ENCODE measurements at regions of chr9 and their contacts with region 1.

Region 1: DNA sequence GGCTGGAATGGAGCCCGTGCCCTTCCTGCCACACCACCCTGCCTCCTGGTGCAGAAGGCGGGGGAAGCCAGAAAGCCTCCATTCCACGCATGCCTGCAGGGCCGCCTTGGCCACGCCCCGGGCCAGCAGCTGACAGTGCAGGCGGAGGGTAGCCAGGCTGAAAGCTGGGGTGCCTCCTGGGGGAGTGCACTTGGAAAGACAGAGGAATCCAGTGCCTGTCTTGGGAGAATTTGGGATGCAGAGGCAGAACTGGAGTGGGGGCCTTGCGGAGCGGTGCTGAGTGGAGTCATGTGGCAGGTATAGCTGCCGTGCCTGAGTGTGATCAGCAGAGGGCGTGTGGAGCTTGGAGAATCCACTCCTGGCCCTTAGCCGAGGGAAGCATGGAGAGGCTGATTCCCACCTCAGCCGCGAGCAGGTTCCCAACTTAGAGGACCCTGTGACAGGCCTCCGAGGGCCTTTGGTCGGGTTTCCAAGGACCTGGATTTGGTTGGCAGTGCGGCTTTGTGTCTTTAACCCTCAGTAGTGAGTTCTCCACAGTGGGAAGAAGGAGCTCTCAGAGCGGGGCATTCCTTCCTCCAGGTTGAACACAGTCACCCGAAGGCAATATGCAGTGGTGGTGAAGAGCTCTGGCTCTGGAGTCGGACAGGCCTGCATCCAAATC is 9.1 kb upstream of the URM1 start:
- DNase-seq: peak; percentile 48 to 69 (median 64)
- ATAC-seq: peak; percentile 94
- H3K4me3 ChIP-seq: peak overlapping the region; percentile 61
- H3K4me3 Mint-ChIP-seq: peak overlapping the region; percentile 68 to 92 (median 87)
- H3K27ac ChIP-seq: peak overlapping the region; percentile 48
- H3K27ac Mint-ChIP-seq: peak overlapping the region in 6 of 9 donors; percentile 57 to 81 (median 74)
- H3K4me1 ChIP-seq: peaks cover 5 to 9% of the 10 kb centered on the region in 2 donors
- H3K4me1 Mint-ChIP-seq: peaks cover 0 to 22% (median 6%) of the 10 kb centered on the region in 7 donors
- H3K27me3 ChIP-seq: no peaks in the 10 kb centered on the region
- H3K27me3 Mint-ChIP-seq: no peaks in the 10 kb centered on the region

Region 2: GRCh38 chr9:128296337-128297220 is 65.5 kb before region 1 on chr9:
- CTCF ChIA-PET with region 1: interaction called, 5 read pairs
- POLR2A ChIA-PET with region 1: no interaction called
- intact Hi-C with region 1: loop called (anchors 1 kb)
- DNase-seq: no peak
- ATAC-seq: no peak
- H3K4me3 ChIP-seq: no peak overlapping the region
- H3K4me3 Mint-ChIP-seq: no peak overlapping the region
- H3K27ac ChIP-seq: no peak overlapping the region
- H3K27ac Mint-ChIP-seq: no peak overlapping the region
- H3K4me1 ChIP-seq: no peaks in the 10 kb centered on the region
- H3K4me1 Mint-ChIP-seq: peaks cover 0 to 5% (median 4%) of the 10 kb centered on the region in 7 donors
- H3K27me3 ChIP-seq: no peaks in the 10 kb centered on the region
- H3K27me3 Mint-ChIP-seq: no peaks in the 10 kb centered on the region

Region 3: DNA sequence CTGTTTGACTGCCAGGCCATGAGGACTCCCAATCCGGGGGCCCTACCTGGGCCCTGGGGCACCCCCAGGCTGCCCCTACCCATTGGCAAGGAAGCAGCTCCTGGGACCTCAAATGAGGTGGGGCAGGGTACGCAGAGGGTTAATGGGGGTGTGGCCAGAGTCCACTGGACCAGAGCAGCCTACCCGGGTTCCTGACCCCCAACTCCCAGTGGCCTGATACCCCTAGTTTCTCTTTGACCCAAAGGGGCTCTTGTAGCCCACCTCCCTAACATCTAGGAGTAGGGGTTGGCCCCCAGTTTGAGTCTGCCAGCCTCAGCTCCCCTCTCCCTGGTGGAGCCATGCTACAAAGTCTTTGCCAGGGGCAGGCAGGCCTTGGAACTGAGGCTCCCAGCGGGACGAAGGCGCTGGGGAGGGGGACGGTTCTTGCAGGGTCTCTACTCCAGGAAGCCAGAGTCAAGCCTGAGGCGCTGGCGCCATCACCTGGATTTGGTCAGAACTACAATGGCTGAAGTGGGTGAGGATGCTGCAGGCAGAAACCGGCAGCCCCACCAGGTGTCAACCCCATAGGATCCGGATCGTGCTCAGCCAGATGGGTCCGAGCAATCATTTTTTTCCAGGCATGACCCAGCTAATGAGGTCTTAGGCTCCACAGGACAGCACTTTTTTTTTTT is 50.1 kb after region 1 on chr9:
- CTCF ChIA-PET with region 1: interaction called, 20 read pairs
- POLR2A ChIA-PET with region 1: no interaction called
- intact Hi-C with region 1: loop called (anchors 1 kb)
- DNase-seq: peak in 7 of 9 donors; percentile 24 to 60 (median 43)
- ATAC-seq: peak; percentile 60
- H3K4me3 ChIP-seq: no peak overlapping the region
- H3K4me3 Mint-ChIP-seq: no peak overlapping the region
- H3K27ac ChIP-seq: no peak overlapping the region
- H3K27ac Mint-ChIP-seq: no peak overlapping the region
- H3K4me1 ChIP-seq: no peaks in the 10 kb centered on the region
- H3K4me1 Mint-ChIP-seq: peaks cover 0 to 4% (median 0%) of the 10 kb centered on the region in 7 donors
- H3K27me3 ChIP-seq: no peaks in the 10 kb centered on the region
- H3K27me3 Mint-ChIP-seq: peaks cover 47 to 61% (median 54%) of the 10 kb centered on the region in 5 donors

Region 4: GRCh38 chr9:128420060-128420650 is 58.0 kb after region 1 on chr9:
- CTCF ChIA-PET with region 1: interaction called, 23 read pairs
- POLR2A ChIA-PET with region 1: no interaction called
- intact Hi-C with region 1: loop called in 1 of 2 experiments (anchors 1 kb)
- DNase-seq: peak in 8 of 9 donors; percentile 33 to 85 (median 44)
- ATAC-seq: peak; percentile 92
- H3K4me3 ChIP-seq: peak overlapping the region; percentile 58
- H3K4me3 Mint-ChIP-seq: peak overlapping the region; percentile 70 to 88 (median 81)
- H3K27ac ChIP-seq: no peak overlapping the region
- H3K27ac Mint-ChIP-seq: no peak overlapping the region
- H3K4me1 ChIP-seq: peaks cover 8 to 9% of the 10 kb centered on the region in 2 donors
- H3K4me1 Mint-ChIP-seq: peaks cover 5 to 13% (median 11%) of the 10 kb centered on the region in 7 donors
- H3K27me3 ChIP-seq: peaks cover 5 to 7% of the 10 kb centered on the region in 2 donors
- H3K27me3 Mint-ChIP-seq: peaks cover 16 to 55% (median 25%) of the 10 kb centered on the region in 5 donors

Region 5: DNA sequence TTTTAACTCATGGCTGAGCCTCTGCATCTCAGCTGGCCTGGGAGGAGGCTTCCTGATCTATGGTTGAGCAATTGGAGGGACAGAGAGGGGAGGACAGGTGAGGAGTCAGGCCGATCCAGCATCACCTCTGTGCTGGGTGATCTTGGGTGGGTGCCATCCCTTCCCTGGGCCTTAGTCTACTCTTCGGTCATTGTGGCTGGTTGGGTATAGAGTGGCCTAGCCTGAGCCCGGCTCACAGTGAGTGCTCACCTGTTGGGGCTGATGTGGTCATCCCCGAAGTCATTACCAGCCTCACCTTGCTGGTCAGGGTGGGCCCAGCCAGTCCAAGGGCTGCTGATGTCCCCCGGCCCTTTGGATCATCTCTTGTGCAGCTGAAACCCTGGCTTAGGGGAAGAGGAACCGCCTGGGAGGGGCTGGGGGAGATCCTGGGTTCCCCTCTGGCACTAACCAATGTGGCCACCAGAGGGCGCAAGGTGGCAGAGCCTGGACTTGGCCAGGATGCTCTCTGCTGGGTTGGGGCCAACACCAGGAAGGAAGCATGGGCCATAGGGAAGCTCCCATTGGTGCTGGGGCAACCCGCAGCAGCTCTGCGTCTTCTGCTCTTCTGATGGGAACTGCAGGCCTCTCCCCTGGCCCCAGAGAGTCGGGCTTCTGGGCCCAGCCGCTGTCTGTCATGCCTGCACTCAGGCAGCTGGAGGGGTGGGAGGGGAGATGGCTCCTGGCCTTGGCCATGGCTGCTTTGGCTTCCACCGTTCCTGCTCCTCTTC is 76.4 kb after region 1 on chr9:
- CTCF ChIA-PET with region 1: no interaction called
- POLR2A ChIA-PET with region 1: no interaction called
- intact Hi-C with region 1: loop called in 1 of 2 experiments (anchors 1 kb)
- DNase-seq: peak; percentile 40 to 86 (median 70)
- ATAC-seq: peak; percentile 97
- H3K4me3 ChIP-seq: no peak overlapping the region
- H3K4me3 Mint-ChIP-seq: no peak overlapping the region
- H3K27ac ChIP-seq: no peak overlapping the region
- H3K27ac Mint-ChIP-seq: no peak overlapping the region
- H3K4me1 ChIP-seq: no peaks in the 10 kb centered on the region
- H3K4me1 Mint-ChIP-seq: peaks cover 0 to 6% (median 4%) of the 10 kb centered on the region in 7 donors
- H3K27me3 ChIP-seq: no peaks in the 10 kb centered on the region
- H3K27me3 Mint-ChIP-seq: no peaks in the 10 kb centered on the region

Region 6: GRCh38 chr9:128504485-128505413 is 142.6 kb after region 1 on chr9 and contains the start of gene GLE1:
- CTCF ChIA-PET with region 1: interaction called, 3 read pairs
- POLR2A ChIA-PET with region 1: no interaction called
- intact Hi-C with region 1: loop called in 1 of 2 experiments (anchors 5 kb)
- DNase-seq: peak; percentile 93 to 99 (median 97)
- ATAC-seq: peak; percentile 98
- H3K4me3 ChIP-seq: peak within 1 kb of the TSS; percentile 97
- H3K4me3 Mint-ChIP-seq: peak within 1 kb of the TSS; percentile 92 to 100 (median 99)
- H3K27ac ChIP-seq: peak within 1 kb of the TSS; percentile 92
- H3K27ac Mint-ChIP-seq: peak within 1 kb of the TSS; percentile 82 to 100 (median 99)
- H3K4me1 ChIP-seq: peaks cover 8 to 11% of the 10 kb centered on the region in 2 donors
- H3K4me1 Mint-ChIP-seq: peaks cover 0 to 38% (median 34%) of the 10 kb centered on the region in 7 donors
- H3K27me3 ChIP-seq: no peaks in the 10 kb centered on the region
- H3K27me3 Mint-ChIP-seq: no peaks in the 10 kb centered on the region
- total RNA-seq, gene GLE1: 14.2 to 46.5 (median 30.5) TPM

Measured in naive thymus-derived CD4-positive, alpha-beta T cell (primary cell).